ENCODE measurements at regions of chr12 and their contacts with region 1.

Region 1: GRCh38 chr12:89821901-89822300 is 113.3 kb upstream of the ATP2B1 start:
- DNase-seq: no peak
- ATAC-seq: peak; percentile 65
- H3K4me3 Mint-ChIP-seq: no peak overlapping the region
- H3K27ac Mint-ChIP-seq: peak overlapping the region; percentile 54
- H3K4me1 Mint-ChIP-seq: peaks cover 30% of the 10 kb centered on the region
- H3K27me3 Mint-ChIP-seq: no peaks in the 10 kb centered on the region
- CTCF ChIP-seq: no peak

Region 2: DNA sequence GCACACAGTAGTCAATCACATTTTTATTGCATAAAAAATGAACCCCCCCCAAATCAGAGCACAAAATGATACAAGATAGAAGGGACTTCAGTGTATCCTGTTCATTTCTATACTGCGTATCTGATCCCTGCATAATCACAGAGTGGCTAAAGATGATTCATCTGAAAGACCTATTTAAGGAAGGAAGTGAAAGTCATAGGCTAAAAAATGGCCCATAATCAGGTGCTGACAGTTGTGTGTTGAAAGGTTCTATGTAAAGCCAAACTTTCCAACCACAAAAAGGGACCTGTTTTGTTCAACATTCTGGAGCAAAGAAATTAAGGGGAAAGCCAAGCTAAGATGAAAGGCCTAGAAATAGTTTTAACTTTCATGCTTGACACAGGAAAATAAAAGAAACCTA is 34.5 kb after region 1 on chr12:
- CTCF ChIA-PET with region 1: no interaction called
- POLR2A ChIA-PET with region 1: no interaction called
- intact Hi-C with region 1: loop called (anchors 5 kb)
- DNase-seq: no peak
- ATAC-seq: peak; percentile 86
- H3K4me3 Mint-ChIP-seq: peak overlapping the region; percentile 68
- H3K27ac Mint-ChIP-seq: peak overlapping the region; percentile 91
- H3K4me1 Mint-ChIP-seq: peaks cover 64% of the 10 kb centered on the region
- H3K27me3 Mint-ChIP-seq: no peaks in the 10 kb centered on the region
- CTCF ChIP-seq: no peak

Measured in activated B cell treated with CpG ODN at 0.5 μM for 24 hours (primary cell).